Endothelial cell of umbilical vein (primary cell): ENCODE measurements at regions of chr2 and their contacts with region 1.

Region 1: GRCh38 chr2:35510636-35511035 is 844.9 kb upstream of the CRIM1 start:
- DNase-seq: peak; percentile 92
- H3K4me3 ChIP-seq: no peak overlapping the region
- H3K27ac ChIP-seq: peak overlapping the region; percentile 74
- H3K4me1 ChIP-seq: peaks cover 30% of the 10 kb centered on the region
- H3K27me3 ChIP-seq: no peaks in the 10 kb centered on the region
- CTCF ChIP-seq: no peak
- POLR2A ChIP-seq: no peak

Region 2: DNA sequence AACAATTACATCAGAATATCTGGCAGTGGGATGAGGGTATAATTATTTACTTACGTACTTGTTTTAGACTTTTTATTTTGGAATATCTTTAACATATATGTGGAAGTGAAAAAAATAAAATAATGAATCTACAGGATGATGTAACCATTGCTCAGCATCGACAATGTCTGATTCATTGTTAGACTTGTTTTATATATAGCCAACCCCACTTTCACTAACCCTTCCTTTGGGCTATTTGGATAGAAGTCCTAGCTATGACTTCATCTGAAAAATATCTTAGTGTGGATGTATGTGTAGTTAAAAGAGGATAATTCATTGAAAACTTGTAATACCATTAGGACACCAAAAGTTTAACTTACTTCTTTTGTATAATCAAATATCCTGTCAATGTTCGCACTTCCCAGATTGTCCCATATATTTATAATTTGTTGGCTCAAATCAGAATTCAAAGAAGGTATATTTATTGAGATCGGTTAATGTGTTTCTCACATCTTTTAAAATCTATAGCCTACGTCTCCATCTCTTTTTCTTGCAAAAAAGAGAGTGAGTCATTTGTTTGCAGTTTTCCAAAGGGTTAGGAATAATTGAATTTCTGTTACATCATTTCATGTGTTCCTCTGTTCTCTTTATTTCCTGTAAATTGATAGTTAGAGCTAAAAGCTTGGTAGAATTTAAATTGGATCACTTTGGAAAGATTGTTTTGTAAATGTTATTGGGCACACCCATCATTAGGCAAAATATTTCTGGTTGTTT is 1405.4 kb before region 1 on chr2:
- CTCF ChIA-PET with region 1: no interaction called
- POLR2A ChIA-PET with region 1: no interaction called
- dilution Hi-C with region 1: no loop called
- intact Hi-C with region 1: loop called (anchors 2 kb)
- DNase-seq: peak; percentile 83
- H3K4me3 ChIP-seq: peak overlapping the region in 2 of 3 experiments; percentile 16 to 51
- H3K27ac ChIP-seq: peak overlapping the region; percentile 95
- H3K4me1 ChIP-seq: peaks cover 39% of the 10 kb centered on the region
- H3K27me3 ChIP-seq: no peaks in the 10 kb centered on the region
- CTCF ChIP-seq: no peak
- POLR2A ChIP-seq: no peak

Region 3: GRCh38 chr2:35530615-35531135 is 20.0 kb after region 1 on chr2:
- CTCF ChIA-PET with region 1: no interaction called
- POLR2A ChIA-PET with region 1: no interaction called
- dilution Hi-C with region 1: no loop called
- intact Hi-C with region 1: no loop called
- DNase-seq: no peak
- H3K4me3 ChIP-seq: no peak overlapping the region
- H3K27ac ChIP-seq: no peak overlapping the region
- H3K4me1 ChIP-seq: no peaks in the 10 kb centered on the region
- H3K27me3 ChIP-seq: no peaks in the 10 kb centered on the region
- CTCF ChIP-seq: no peak
- POLR2A ChIP-seq: no peak